ENCODE measurements at regions of chr6 and their contacts with region 1.

Region 1: GRCh38 chr6:32933636-32934085 is 7.2 kb downstream of the HLA-DMB start:
- DNase-seq: peak in 9 of 10 donors; percentile 36 to 91 (median 77)

Region 2: GRCh38 chr6:32971581-32972352 is 38.1 kb after region 1 on chr6:
- intact Hi-C with region 1: loop called (anchors 5 kb)
- DNase-seq: peak; percentile 99 to 100 (median 99)

Region 3: GRCh38 chr6:32984605-32985389 is 51.1 kb after region 1 on chr6:
- intact Hi-C with region 1: loop called (anchors 1 kb)
- DNase-seq: peak; percentile 75 to 97 (median 88)

Measured in posterior cingulate gyrus (tissue), 11 donors.